ENCODE measurements at regions of chr6 and their contacts with region 1.

Region 1: GRCh38 chr6:35297601-35298481 is at the start of gene DEF6:
- DNase-seq: peak; percentile 95
- ATAC-seq: peak; percentile 75
- H3K4me3 Mint-ChIP-seq: peak within 1 kb of the TSS; percentile 92
- H3K27ac Mint-ChIP-seq: peak within 1 kb of the TSS; percentile 93
- H3K4me1 Mint-ChIP-seq: peaks cover 45% of the 10 kb centered on the region
- H3K27me3 Mint-ChIP-seq: no peaks in the 10 kb centered on the region
- CTCF ChIP-seq: peak; percentile 93
- total RNA-seq, gene DEF6: 97.1 to 99.1 TPM

Region 2: DNA sequence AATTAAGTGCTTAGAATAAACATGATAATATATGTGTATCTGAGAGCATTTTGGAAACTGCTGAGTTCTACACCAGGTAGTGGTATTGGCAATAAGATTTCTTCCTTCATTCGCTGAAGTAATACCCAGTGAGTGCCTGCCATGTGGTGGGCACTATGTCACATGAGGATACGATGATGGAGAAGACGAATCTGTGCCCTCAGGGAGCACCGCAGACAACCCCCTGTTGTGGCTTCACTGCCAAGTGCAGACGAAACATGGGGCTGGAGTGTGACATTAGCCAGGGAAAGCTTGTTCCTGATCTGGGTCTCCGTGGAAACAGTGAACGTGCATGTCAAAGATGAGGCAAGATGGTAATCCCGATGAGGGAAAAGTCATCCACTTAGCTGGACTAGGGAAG is 30.4 kb before region 1 on chr6:
- CTCF ChIA-PET with region 1: interaction called, 20 read pairs
- POLR2A ChIA-PET with region 1: interaction called, 3 read pairs
- intact Hi-C with region 1: no loop called
- DNase-seq: no peak
- ATAC-seq: no peak
- H3K4me3 Mint-ChIP-seq: no peak overlapping the region
- H3K27ac Mint-ChIP-seq: no peak overlapping the region
- H3K4me1 Mint-ChIP-seq: peaks cover 36% of the 10 kb centered on the region
- H3K27me3 Mint-ChIP-seq: no peaks in the 10 kb centered on the region
- CTCF ChIP-seq: no peak

Region 3: DNA sequence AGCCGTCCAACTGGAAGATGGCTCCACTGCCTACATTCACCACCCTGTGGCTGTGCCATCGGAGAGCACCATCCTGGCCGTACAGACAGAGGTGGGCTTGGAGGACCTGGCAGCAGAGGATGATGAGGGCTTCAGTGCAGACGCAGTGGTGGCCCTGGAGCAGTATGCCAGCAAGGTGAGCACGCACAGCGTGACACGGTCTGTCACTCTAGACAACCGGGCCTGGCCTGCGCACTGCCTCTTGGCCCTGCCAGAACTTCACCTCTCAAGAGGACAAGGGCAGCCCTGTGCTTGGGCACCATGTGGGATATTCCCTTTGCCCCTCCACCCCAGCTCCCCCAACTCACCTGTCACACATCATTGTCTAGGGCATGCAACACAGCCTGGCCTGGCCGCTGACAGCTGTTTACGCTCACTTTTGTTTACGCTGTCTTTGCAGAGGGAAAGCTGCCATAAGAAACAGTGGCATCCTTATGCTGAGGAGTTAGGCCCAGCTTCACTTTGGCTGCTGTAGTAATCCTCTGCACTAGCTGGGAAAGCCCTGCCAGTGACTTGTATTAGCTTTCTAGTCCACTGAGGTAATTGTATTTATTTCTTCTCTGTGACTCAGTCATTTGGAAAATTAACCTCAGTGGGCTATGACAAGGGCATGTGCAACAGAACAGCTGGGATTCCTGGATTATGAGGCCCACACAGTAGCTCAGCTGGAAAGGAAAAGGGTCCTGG is 10.0 kb before region 1 on chr6:
- CTCF ChIA-PET with region 1: interaction called, 13 read pairs
- POLR2A ChIA-PET with region 1: interaction called, 3 read pairs
- intact Hi-C with region 1: no loop called
- DNase-seq: no peak
- ATAC-seq: no peak
- H3K4me3 Mint-ChIP-seq: no peak overlapping the region
- H3K27ac Mint-ChIP-seq: no peak overlapping the region
- H3K4me1 Mint-ChIP-seq: no peaks in the 10 kb centered on the region
- H3K27me3 Mint-ChIP-seq: no peaks in the 10 kb centered on the region
- CTCF ChIP-seq: no peak

Region 4: GRCh38 chr6:35318196-35319171 is 20.6 kb after region 1 on chr6:
- CTCF ChIA-PET with region 1: interaction called, 241 read pairs
- POLR2A ChIA-PET with region 1: interaction called, 10 read pairs
- intact Hi-C with region 1: no loop called
- DNase-seq: no peak
- ATAC-seq: no peak
- H3K4me3 Mint-ChIP-seq: no peak overlapping the region
- H3K27ac Mint-ChIP-seq: no peak overlapping the region
- H3K4me1 Mint-ChIP-seq: peaks cover 35% of the 10 kb centered on the region
- H3K27me3 Mint-ChIP-seq: no peaks in the 10 kb centered on the region
- CTCF ChIP-seq: no peak

Region 5: GRCh38 chr6:35342258-35343091 is 44.6 kb after region 1 on chr6 and contains the start of gene PPARD:
- CTCF ChIA-PET with region 1: interaction called, 41 read pairs
- POLR2A ChIA-PET with region 1: interaction called, 6 read pairs
- intact Hi-C with region 1: no loop called
- DNase-seq: peak; percentile 98
- ATAC-seq: peak; percentile 98
- H3K4me3 Mint-ChIP-seq: peak within 1 kb of the TSS; percentile 82
- H3K27ac Mint-ChIP-seq: peak within 1 kb of the TSS; percentile 91
- H3K4me1 Mint-ChIP-seq: peaks cover 40% of the 10 kb centered on the region
- H3K27me3 Mint-ChIP-seq: no peaks in the 10 kb centered on the region
- CTCF ChIP-seq: peak; percentile 95
- total RNA-seq, gene PPARD: 26.6 to 26.7 TPM

Region 6: DNA sequence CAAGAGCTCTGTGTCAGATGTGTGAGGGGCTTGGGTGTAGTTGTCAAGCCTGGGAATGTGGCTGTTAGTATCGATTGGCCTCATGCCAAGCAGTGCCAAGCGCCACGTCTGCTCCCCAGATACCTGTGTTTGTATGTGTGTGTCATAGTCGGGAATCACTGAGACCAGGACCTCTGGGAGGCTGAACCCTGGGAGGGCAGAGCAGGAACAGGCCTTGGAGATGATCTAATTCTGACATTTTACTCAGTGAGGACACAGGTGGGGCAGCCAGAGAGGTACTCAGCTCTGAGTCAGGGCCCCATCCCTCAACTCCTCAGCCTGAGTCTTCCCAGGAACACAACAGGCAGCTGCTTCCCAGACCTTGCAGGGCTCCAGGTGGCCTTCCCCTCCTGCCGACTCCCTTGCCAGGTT is 103.1 kb after region 1 on chr6:
- CTCF ChIA-PET with region 1: no interaction called
- POLR2A ChIA-PET with region 1: no interaction called
- intact Hi-C with region 1: no loop called
- DNase-seq: no peak
- ATAC-seq: no peak
- H3K4me3 Mint-ChIP-seq: no peak overlapping the region
- H3K27ac Mint-ChIP-seq: peak overlapping the region; percentile 72
- H3K4me1 Mint-ChIP-seq: peaks cover 13% of the 10 kb centered on the region
- H3K27me3 Mint-ChIP-seq: no peaks in the 10 kb centered on the region
- CTCF ChIP-seq: no peak

Region 7: DNA sequence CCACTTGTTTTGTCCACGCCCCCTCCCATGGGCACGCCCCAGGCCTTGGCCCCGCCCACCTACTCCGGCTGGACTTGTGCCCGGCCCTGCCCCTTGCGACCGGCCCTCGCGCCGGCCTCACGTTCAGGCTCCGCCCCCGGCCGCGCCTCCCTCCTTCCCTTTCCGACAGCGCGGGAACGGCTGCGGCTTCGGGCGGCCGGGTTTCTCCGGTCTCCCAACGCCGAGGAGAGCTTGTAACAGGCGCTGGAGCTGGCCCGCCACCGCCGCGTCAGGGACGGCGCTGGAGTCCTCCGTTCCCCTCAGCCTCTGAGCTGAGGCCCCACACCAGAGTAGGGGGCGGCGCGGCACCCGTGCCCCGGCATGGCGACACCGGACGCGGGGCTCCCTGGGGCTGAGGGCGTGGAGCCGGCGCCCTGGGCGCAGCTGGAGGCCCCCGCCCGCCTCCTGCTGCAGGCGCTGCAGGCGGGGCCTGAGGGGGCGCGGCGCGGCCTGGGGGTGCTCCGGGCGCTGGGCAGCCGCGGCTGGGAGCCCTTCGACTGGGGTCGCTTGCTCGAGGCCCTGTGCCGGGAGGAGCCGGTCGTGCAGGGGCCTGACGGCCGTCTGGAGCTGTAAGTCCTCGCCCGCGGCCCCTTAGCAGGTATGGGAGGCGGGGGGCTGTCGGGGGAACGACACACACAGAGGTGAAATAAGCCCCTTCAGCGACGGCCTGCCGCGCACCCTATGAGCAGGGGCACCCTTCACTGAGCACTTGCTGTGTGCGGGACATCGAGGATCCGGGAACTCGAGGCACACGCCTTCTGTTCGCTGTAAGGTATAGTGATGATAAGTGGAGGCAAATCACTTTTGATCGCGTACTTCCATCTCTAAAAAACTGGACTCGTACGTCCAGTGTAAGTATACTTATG is 154.6 kb after region 1 on chr6 and contains the start of gene FANCE:
- CTCF ChIA-PET with region 1: interaction called, 64 read pairs
- POLR2A ChIA-PET with region 1: interaction called, 6 read pairs
- intact Hi-C with region 1: loop called (anchors 2 kb)
- DNase-seq: peak; percentile 95
- ATAC-seq: peak; percentile 90
- H3K4me3 Mint-ChIP-seq: peak within 1 kb of the TSS; percentile 78
- H3K27ac Mint-ChIP-seq: peak within 1 kb of the TSS; percentile 39
- H3K4me1 Mint-ChIP-seq: peaks cover 36% of the 10 kb centered on the region
- H3K27me3 Mint-ChIP-seq: no peaks in the 10 kb centered on the region
- CTCF ChIP-seq: no peak
- total RNA-seq, gene FANCE: 18.8 to 19.4 TPM

Region 8: GRCh38 chr6:35474131-35474940 is 176.5 kb after region 1 on chr6:
- CTCF ChIA-PET with region 1: interaction called, 4 read pairs
- POLR2A ChIA-PET with region 1: interaction called, 36 read pairs
- intact Hi-C with region 1: loop called (anchors 5 kb)
- DNase-seq: no peak
- ATAC-seq: peak; percentile 31
- H3K4me3 Mint-ChIP-seq: no peak overlapping the region
- H3K27ac Mint-ChIP-seq: peak overlapping the region; percentile 70
- H3K4me1 Mint-ChIP-seq: peaks cover 34% of the 10 kb centered on the region
- H3K27me3 Mint-ChIP-seq: no peaks in the 10 kb centered on the region
- CTCF ChIP-seq: no peak

Measured in activated CD8-positive, alpha-beta T cell treated with anti-CD3 and anti-CD28 coated beads for 36 hours (primary cell).